Dorsolateral prefrontal cortex (tissue), 120 donors: ENCODE measurements at regions of chr2 and their contacts with region 1.

Region 1: GRCh38 chr2:79041032-79041448 is 15.5 kb downstream of the REG3G start:
- DNase-seq: peak in 1 of 10 donors; percentile 22
- H3K4me3 ChIP-seq: no peak overlapping the region
- H3K27ac ChIP-seq: peak overlapping the region in 1 of 59 donors; percentile 19
- H3K27me3 ChIP-seq: peaks cover 0 to 4% (median 0%) of the 10 kb centered on the region in 45 donors
- CTCF ChIP-seq: peak; percentile 43 to 75 (median 64)

Region 2: DNA sequence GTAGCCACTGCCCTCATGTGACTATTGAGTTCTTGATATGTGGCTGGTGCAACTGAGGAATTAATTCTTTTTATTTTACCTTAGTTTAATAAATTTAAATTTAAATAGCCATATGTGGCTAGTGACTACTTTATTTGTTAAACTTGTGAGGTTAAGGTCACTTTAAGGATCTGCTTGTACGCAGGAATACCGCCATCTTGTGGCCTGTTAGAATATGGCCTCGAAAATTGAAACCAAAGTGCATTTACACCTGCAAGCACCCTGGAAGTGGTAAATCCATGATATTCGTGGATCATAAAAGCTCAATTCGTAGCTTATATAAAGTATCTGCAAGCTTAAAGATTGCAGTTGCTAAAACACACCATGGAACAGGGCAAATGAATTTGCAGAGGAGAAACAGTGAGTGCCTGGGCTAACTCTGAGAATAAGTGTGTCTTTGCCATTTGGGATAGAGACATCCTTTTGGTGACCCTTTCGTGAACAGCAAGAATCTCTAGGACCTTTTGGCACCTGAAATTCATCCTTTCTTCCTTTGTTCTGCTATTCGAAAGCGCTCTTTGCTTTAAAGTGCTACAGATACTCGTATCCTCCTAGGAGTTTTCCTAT is 178.4 kb after region 1 on chr2:
- intact Hi-C with region 1: loop called (anchors 5 to 10 kb)
- DNase-seq: peak in 2 of 10 donors; percentile 3 to 56
- H3K4me3 ChIP-seq: no peak overlapping the region
- H3K27ac ChIP-seq: no peak overlapping the region
- H3K27me3 ChIP-seq: no peaks in the 10 kb centered on the region
- CTCF ChIP-seq: peak; percentile 68 to 98 (median 81)

Region 3: GRCh38 chr2:79860228-79861058 is 819.4 kb after region 1 on chr2:
- intact Hi-C with region 1: loop called in 1 of 2 experiments (anchors 10 kb)
- DNase-seq: peak in 3 of 10 donors; percentile 22 to 69 (median 38)
- H3K4me3 ChIP-seq: no peak overlapping the region
- H3K27ac ChIP-seq: peak overlapping the region in 6 of 59 donors; percentile 1 to 45 (median 12)
- H3K27me3 ChIP-seq: no peaks in the 10 kb centered on the region
- CTCF ChIP-seq: peak; percentile 50 to 90 (median 77)